ENCODE measurements at regions of chr2 and their contacts with region 1.

Region 1: GRCh38 chr2:237451643-237452469 is 35.2 kb upstream of the MLPH start:
- DNase-seq: peak; percentile 64
- ATAC-seq: peak; percentile 89
- H3K4me3 Mint-ChIP-seq: no peak overlapping the region
- H3K27ac Mint-ChIP-seq: no peak overlapping the region
- H3K4me1 Mint-ChIP-seq: peaks cover 21% of the 10 kb centered on the region
- H3K27me3 Mint-ChIP-seq: peaks cover 24% of the 10 kb centered on the region
- CTCF ChIP-seq: no peak

Region 2: DNA sequence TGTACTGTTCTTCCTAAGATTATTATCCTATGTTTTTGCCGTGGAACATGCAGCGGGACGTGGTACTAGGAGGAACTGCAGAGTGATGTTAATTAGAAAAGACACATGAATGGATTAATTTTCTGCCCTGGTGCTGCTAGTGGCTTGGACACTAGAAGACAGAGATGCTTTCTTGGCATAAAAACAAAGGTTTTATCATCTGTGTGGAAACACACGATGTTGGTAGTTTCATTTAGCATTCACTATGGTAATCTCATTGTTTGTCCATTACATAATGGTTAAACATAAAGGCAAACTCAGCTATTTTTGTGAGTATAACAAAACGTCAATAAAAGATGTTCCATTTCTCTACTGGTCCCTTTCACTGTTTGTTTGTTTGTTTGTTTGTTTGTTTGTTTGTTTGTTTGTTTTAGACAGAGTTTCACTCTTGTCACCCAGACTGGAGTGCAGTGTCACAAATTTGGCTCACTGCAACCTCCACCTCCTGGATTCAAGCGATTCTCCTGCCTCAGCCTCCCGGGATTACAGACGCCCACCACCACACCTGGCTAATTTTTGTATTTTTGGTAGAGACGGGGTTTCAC is 60.6 kb before region 1 on chr2:
- CTCF ChIA-PET with region 1: no interaction called
- POLR2A ChIA-PET with region 1: no interaction called
- DNase-seq: no peak
- ATAC-seq: no peak
- H3K4me3 Mint-ChIP-seq: no peak overlapping the region
- H3K27ac Mint-ChIP-seq: no peak overlapping the region
- H3K4me1 Mint-ChIP-seq: no peaks in the 10 kb centered on the region
- H3K27me3 Mint-ChIP-seq: peaks cover 8% of the 10 kb centered on the region
- CTCF ChIP-seq: no peak

Region 3: DNA sequence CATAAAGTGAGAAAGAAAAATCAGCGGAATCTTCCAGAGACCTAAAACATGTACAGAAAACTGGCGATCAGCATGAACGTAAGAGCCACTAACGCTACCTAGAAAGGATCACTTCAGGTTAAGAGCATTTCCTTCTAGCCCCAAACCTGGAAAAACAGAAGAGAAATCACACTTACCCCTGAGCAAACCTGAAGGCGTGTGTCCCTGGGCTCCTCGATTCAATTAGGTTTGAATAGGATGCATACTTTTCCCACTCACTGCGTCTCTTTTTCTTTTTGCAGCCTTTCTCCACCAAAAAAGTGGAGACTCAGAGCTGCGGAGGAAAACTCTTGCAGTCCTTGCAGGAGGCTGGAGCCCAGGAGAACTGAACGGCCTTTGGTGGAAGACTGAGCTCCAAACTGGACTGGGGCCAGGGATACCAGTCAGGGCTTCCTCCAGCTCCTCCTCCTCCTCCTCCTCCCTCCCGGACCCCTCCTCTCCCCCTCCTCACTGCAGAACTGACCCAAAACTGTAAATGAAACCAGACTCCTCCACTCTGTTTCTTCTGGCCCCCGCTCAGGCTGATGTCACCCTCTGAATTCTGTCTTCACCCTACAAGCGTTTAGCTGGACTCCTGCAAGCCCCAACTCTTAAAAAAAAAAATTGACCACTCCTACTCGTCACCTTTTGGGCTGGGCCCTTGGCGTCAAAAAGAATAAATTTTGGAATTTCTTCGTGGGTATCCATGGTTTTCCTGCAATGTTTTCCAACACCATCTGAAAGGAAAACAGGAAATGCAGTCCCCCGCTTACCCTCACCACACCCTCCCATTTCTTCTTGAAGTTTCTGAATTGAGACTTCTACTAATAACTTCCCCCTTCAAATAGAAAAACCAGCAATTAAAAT is 37.8 kb before region 1 on chr2 and contains the start of gene COL6A3:
- CTCF ChIA-PET with region 1: interaction called, 92 read pairs
- POLR2A ChIA-PET with region 1: no interaction called
- DNase-seq: no peak
- ATAC-seq: peak; percentile 20; the same call in 1 of the 2 replicates
- H3K4me3 Mint-ChIP-seq: 0 out of 2 replicates have a peak within 1 kb of the TSS, but pooled peaks have one; percentile 1
- H3K27ac Mint-ChIP-seq: no peak within 1 kb of the TSS
- H3K4me1 Mint-ChIP-seq: peaks cover 32% of the 10 kb centered on the region
- H3K27me3 Mint-ChIP-seq: peaks cover 7% of the 10 kb centered on the region; the same call in 1 of the 2 replicates
- CTCF ChIP-seq: no peak
- total RNA-seq, gene COL6A3: 2.6 to 4.4 TPM (median 3.9 TPM) in 3 replicates

Region 4: GRCh38 chr2:237421542-237422116 is 30.2 kb before region 1 on chr2:
- CTCF ChIA-PET with region 1: interaction called, 92 read pairs
- POLR2A ChIA-PET with region 1: no interaction called
- DNase-seq: peak; percentile 90
- ATAC-seq: peak; percentile 98
- H3K4me3 Mint-ChIP-seq: peak overlapping the region; percentile 34; the same call in 1 of the 2 replicates
- H3K27ac Mint-ChIP-seq: no peak overlapping the region
- H3K4me1 Mint-ChIP-seq: peaks cover 9% of the 10 kb centered on the region
- H3K27me3 Mint-ChIP-seq: peaks cover 44% of the 10 kb centered on the region
- CTCF ChIP-seq: peak; percentile 69; the same call in 1 of the 2 replicates

Region 5: DNA sequence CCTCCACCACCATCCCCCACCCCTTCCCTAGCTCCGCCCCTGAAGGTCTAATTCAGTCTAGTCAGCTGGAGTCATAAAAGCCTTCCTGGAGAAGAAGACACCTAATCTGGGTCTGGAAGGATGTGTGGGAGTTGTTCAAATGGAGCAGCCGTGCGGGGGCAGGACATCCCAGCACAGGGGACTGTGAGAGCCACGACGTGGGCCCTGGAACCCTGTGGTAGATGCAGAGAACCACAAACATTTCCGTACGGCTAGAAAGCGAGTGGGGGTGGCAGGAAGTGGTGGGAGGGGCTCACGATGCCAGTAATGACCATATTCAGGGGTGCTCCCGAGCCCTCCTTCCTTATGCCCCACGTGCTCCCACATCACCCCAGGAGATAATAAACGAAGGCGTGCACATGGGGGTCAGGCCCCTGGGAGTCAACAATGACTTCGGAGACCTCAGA is 17.0 kb before region 1 on chr2:
- CTCF ChIA-PET with region 1: interaction called, 21 read pairs
- POLR2A ChIA-PET with region 1: interaction called, 4 read pairs
- DNase-seq: no peak
- ATAC-seq: no peak
- H3K4me3 Mint-ChIP-seq: no peak overlapping the region
- H3K27ac Mint-ChIP-seq: no peak overlapping the region
- H3K4me1 Mint-ChIP-seq: peaks cover 42% of the 10 kb centered on the region
- H3K27me3 Mint-ChIP-seq: no peaks in the 10 kb centered on the region
- CTCF ChIP-seq: no peak

Region 6: DNA sequence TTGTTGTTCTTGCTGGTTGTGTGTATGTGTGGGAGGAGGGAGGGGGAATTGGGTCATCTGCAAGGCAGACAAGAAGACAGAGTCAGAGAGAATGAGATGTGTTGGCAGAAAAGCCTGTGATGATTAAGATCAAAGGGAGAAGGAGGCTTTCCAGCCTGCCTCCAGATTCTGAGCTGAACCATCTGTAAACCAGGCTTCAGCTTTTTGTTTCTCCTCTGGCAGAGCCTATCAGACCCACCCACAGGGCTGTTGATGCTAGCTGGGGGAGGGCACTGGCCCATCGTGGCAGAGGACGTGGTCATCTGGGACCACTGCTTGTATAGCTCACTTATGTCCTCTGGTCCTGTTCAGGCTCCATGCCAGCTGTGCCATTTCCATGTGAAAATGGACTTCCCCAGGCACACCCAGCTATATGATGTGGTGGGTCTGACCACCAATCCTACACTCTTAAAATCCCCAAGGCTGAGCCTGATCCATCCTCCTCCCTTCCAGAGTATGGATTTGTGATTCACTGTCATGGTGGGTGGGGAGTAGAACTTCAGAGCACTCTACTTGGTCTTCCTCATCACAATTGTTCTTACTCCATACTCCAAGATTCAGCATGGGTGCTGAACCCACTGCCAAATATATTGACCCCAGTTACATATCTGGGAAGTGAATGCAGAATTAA is 10.1 kb before region 1 on chr2:
- CTCF ChIA-PET with region 1: interaction called, 21 read pairs
- POLR2A ChIA-PET with region 1: no interaction called
- DNase-seq: no peak
- ATAC-seq: no peak
- H3K4me3 Mint-ChIP-seq: no peak overlapping the region
- H3K27ac Mint-ChIP-seq: no peak overlapping the region
- H3K4me1 Mint-ChIP-seq: peaks cover 17% of the 10 kb centered on the region
- H3K27me3 Mint-ChIP-seq: peaks cover 6% of the 10 kb centered on the region
- CTCF ChIP-seq: no peak

Region 7: DNA sequence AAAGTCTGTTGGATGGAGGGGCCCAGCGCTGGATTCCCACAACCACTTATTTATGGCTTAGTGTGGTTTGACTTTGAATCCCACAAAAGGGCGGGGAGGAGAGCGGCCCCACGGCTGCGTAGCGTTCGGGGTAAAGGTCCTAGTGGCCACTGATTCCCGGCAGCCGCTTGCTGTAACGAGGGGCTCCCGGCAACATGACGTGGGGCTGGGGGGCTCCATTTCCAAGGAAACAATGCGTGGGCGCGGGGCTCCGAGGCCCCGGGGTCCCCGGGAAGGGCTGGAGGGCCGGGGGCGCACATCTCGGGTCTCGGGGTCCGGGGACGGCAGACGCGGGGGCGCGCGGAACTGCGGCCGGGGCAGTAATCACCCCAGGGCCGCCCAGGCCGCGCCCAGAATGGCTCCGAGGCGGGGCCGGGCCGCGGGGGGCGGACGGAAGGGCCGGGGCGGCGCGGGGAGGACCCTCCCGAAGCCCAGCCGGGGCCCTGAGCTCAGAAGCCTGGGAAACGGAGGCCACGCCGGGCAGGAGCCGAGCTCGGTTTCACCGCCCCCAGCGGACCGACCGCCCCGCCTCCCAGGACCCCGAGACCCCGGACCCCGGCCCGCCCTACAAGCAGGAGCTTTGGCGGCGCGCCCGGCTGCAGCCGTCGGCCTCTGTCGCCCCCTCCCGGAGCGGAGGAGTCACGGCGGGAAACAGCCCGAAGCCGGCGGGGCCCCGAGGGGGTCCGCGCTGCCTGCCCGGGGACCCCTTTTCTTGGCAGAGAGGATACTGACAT is 23.3 kb after region 1 on chr2:
- CTCF ChIA-PET with region 1: interaction called, 23 read pairs
- POLR2A ChIA-PET with region 1: interaction called, 5 read pairs
- DNase-seq: peak; percentile 88
- ATAC-seq: peak; percentile 81
- H3K4me3 Mint-ChIP-seq: peak overlapping the region; percentile 84
- H3K27ac Mint-ChIP-seq: peak overlapping the region; percentile 53; the same call in 1 of the 2 replicates
- H3K4me1 Mint-ChIP-seq: peaks cover 18% of the 10 kb centered on the region
- H3K27me3 Mint-ChIP-seq: peaks cover 47% of the 10 kb centered on the region
- CTCF ChIP-seq: peak; percentile 70

Region 8: DNA sequence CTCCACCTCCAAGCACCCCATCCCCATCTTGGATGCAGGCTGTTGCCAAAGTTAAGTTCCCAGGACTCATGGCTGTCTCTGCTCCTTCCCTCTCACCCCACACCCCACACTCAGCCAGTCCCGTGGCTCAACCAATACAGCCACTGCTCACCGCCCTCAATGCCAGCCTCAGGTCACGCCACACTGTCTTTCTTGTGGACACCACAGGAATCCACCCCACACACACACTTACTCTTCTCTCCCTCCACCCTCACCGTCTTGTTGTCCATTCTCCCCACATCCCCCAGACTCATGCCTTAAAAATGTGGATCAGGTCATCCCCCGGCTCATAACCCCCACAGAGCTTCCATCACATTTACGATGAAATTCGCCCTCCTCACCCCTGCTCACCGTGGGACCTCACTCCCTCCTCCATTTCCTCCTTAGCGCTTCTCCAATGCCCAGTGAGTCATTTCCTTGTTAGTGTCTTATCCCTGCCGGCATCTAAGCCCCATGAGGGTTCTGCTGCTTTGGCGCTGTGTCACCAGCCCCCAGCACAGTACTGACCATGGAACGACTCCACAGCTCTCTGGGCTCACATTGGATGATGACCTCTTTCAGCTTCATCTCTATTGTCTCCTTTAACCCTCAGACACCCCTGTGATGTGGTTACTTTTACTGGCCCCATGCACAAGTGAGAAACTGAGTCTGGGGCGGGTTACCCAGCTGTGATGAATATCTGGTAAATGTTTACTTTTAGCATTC is 49.0 kb after region 1 on chr2:
- CTCF ChIA-PET with region 1: no interaction called
- POLR2A ChIA-PET with region 1: no interaction called
- DNase-seq: no peak
- ATAC-seq: no peak
- H3K4me3 Mint-ChIP-seq: no peak overlapping the region
- H3K27ac Mint-ChIP-seq: peak overlapping the region; percentile 12; the same call in 1 of the 2 replicates
- H3K4me1 Mint-ChIP-seq: peaks cover 24% of the 10 kb centered on the region
- H3K27me3 Mint-ChIP-seq: no peaks in the 10 kb centered on the region
- CTCF ChIP-seq: no peak